ENCODE measurements at regions of chr2 and their contacts with region 1.

Region 1: DNA sequence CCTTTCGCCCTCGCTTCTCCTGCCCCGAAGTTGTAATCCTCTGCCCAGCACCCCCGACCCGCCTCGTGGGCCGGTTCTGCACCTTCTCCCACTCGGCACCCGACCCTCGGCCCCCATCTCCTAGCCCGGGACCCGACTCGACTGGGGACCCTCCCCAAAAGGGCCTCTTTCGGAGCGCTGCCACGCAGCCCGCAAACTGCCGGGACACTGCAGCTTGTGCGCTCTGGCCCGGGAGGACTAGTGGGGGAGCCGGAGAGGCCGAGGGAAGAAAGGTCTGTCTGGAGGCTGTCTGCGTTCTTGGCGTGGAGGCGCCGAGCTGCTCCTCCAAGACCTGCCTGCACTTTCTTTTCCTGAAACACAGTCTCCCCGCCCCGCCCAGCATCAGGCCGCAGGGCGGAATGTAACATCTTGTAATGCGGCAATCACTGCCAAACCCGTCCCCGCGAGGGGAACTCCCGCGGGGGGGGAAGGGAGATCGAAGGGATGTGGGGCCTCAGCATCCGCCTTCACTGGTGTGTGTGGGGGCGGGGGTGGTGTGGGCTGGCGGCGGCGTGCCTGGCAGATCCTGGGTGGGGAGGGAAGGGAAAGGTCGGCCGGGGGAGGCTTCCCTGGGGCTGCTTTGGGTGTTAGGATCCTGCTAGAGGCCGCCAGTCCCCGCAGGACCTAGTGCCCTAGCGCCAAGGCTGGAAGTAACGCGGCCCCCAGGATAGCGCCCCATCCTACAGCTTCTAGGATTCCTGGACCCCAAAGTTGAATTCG is 7.4 kb downstream of the DLX2 start:
- DNase-seq: peak; percentile 88
- H3K4me3 ChIP-seq: peak overlapping the region; percentile 65 to 82 (median 75)
- H3K27ac ChIP-seq: peak overlapping the region; percentile 43
- H3K4me1 ChIP-seq: peaks cover 51% of the 10 kb centered on the region
- H3K27me3 ChIP-seq: peaks cover 3% of the 10 kb centered on the region
- CTCF ChIP-seq: no peak

Region 2: GRCh38 chr2:171999604-172000469 is 95.5 kb before region 1 on chr2 and contains the start of gene METAP1D:
- CTCF ChIA-PET with region 1: no interaction called
- dilution Hi-C with region 1: no loop called
- in situ Hi-C with region 1: loop called in 1 of 2 experiments (anchors 5 kb)
- intact Hi-C with region 1: no loop called
- DNase-seq: peak; percentile 87
- H3K4me3 ChIP-seq: peak within 1 kb of the TSS; percentile 67 to 91 (median 86)
- H3K27ac ChIP-seq: peak within 1 kb of the TSS; percentile 89
- H3K4me1 ChIP-seq: peaks cover 17% of the 10 kb centered on the region
- H3K27me3 ChIP-seq: no peaks in the 10 kb centered on the region
- CTCF ChIP-seq: no peak
- total RNA-seq, gene METAP1D: 3.3 to 4.7 TPM

Region 3: DNA sequence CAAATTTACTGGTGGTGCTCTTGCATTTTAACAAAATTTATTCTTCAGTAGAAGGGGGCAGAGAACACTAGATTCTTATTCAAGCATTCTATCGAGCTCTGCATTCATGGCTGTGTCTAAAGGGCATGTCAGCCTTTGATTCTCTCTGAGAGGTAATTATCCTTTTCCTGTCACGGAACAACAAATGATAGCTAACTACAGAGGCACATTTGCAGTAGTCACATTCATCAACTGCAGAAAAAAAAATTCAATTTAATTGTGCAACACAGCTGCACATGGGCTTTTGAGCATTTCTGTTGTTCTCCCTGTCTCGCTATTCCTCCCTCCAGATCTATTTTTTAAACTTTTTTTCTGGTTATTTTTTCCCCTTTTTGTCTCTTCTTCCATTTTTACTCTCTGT is 23.0 kb before region 1 on chr2:
- CTCF ChIA-PET with region 1: no interaction called
- dilution Hi-C with region 1: no loop called
- in situ Hi-C with region 1: no loop called
- intact Hi-C with region 1: no loop called
- DNase-seq: no peak
- H3K4me3 ChIP-seq: no peak overlapping the region
- H3K27ac ChIP-seq: no peak overlapping the region
- H3K4me1 ChIP-seq: no peaks in the 10 kb centered on the region
- H3K27me3 ChIP-seq: no peaks in the 10 kb centered on the region
- CTCF ChIP-seq: no peak

Region 4: GRCh38 chr2:172084734-172085459 is 10.4 kb before region 1 on chr2:
- CTCF ChIA-PET with region 1: no interaction called
- dilution Hi-C with region 1: no loop called
- in situ Hi-C with region 1: no loop called
- intact Hi-C with region 1: loop called (anchors 1 kb)
- DNase-seq: peak; percentile 97
- H3K4me3 ChIP-seq: peak overlapping the region; percentile 49 to 65 (median 55)
- H3K27ac ChIP-seq: peak overlapping the region; percentile 20
- H3K4me1 ChIP-seq: peaks cover 14% of the 10 kb centered on the region
- H3K27me3 ChIP-seq: peaks cover 18% of the 10 kb centered on the region
- CTCF ChIP-seq: peak in 1 of 2 donors; percentile 4

Measured in mammary epithelial cell (primary cell).